ENCODE measurements at regions of chr10 and their contacts with region 1.

Region 1: GRCh38 chr10:12264204-12264940 is 68.4 kb downstream of the CDC123 start:
- DNase-seq: peak; percentile 84
- H3K4me3 Mint-ChIP-seq: peak overlapping the region; percentile 58
- H3K27ac Mint-ChIP-seq: peak overlapping the region; percentile 79
- H3K4me1 Mint-ChIP-seq: peaks cover 17% of the 10 kb centered on the region
- H3K27me3 Mint-ChIP-seq: no peaks in the 10 kb centered on the region

Region 2: DNA sequence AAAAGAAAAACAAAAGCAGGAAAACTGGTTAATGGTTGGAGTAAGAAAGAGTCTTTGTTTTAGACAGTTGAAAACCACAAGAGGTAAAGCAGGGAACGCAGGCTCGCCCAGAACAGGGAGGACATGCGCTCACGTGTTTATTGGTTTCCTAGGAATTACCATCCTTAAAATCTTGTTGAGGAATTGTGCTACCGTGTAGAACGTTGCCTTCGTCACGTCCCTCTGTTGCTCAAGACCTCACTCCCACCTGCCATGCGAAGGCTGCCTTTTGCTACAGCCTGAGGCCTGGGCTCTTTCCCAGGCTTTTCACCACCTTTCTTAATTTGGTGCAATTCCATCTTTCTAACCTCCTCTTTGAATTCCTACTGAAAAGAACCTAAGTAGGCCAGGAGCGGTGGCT is 23.4 kb after region 1 on chr10:
- CTCF ChIA-PET with region 1: no interaction called
- intact Hi-C with region 1: no loop called
- DNase-seq: no peak
- H3K4me3 Mint-ChIP-seq: no peak overlapping the region
- H3K27ac Mint-ChIP-seq: no peak overlapping the region
- H3K4me1 Mint-ChIP-seq: no peaks in the 10 kb centered on the region
- H3K27me3 Mint-ChIP-seq: no peaks in the 10 kb centered on the region

Region 3: DNA sequence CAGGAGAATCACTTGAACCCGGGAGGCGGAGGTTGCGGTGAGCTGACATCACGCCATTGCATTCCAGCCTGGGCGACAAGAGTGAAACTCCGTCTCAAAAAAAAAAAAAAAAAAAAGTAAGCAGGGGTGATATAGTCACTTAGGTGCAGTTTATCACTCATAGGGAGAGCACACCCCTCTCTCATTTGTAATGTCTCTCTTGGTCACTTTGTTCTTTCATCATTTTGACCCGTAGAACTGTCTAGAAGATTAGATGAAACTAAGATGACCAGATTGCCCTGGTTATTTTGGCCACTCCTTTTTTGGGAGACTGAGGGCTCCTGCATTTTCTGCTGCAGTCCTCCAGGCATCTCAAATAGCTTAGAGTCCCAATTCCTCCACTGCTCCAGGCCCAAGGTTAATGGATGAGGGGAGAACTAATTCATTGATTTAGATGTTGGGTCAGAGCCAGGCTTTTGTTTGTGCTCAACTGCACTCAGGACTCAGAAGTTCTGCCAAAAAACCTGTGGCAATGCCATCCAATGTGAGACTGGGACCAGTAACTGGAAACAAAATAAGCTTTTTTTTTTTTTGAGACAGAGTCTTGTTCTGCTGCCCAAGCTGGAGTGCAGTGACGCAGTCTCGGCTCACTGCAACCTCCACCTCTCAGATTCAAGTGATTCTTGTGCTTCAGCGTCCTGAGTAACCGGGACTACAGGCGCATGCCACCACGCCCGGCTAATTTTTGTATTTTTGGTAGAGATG is 35.0 kb after region 1 on chr10:
- CTCF ChIA-PET with region 1: no interaction called
- intact Hi-C with region 1: loop called (anchors 2 kb)
- DNase-seq: no peak
- H3K4me3 Mint-ChIP-seq: no peak overlapping the region
- H3K27ac Mint-ChIP-seq: no peak overlapping the region
- H3K4me1 Mint-ChIP-seq: peaks cover 10% of the 10 kb centered on the region
- H3K27me3 Mint-ChIP-seq: no peaks in the 10 kb centered on the region

Region 4: DNA sequence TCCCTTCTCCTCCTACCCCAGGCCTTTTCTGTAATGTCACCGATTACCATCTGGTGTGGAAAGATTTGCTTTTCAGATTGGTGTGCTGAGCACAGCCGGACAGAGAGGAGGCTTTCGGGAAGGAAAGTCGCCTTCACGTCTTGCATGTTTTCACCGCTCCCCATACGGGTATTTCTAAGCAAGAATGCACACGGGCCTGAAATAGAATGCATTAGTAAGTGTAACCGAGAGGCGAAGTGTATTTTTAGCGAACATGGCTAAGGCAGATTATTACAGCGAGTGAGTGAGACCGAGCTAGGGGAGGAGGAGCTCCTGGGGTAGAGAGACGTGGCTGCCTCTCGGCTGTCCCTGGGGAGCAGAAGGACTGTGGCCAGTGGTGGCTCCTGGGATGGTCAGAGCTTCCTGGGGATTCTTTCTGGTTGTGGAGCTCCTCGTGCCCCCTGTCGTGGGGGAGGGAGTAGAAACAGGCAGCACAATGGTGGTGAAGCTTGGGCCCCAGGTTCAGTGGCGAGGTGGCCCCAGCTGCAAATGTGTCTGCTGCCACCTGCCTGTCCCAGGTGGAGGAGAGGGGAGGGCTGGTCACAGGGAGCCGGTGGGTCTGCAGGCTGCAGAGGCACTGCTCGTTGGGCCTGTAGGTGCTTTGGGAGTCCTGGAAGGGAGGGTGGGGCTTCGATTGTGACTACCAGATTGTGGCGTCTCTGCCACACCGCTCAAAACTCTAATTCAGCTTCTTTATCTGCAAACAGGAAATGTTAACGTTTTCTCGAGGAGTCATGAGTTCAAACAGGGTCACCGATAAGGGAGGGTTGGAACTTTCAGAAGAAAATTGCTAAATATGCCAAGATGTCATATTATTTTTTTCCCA is 220.8 kb after region 1 on chr10:
- CTCF ChIA-PET with region 1: interaction called, 7 read pairs
- intact Hi-C with region 1: loop called (anchors 1 kb)
- DNase-seq: peak; percentile 65
- H3K4me3 Mint-ChIP-seq: peak overlapping the region; percentile 25
- H3K27ac Mint-ChIP-seq: peak overlapping the region; percentile 8
- H3K4me1 Mint-ChIP-seq: peaks cover 20% of the 10 kb centered on the region
- H3K27me3 Mint-ChIP-seq: no peaks in the 10 kb centered on the region

Region 5: DNA sequence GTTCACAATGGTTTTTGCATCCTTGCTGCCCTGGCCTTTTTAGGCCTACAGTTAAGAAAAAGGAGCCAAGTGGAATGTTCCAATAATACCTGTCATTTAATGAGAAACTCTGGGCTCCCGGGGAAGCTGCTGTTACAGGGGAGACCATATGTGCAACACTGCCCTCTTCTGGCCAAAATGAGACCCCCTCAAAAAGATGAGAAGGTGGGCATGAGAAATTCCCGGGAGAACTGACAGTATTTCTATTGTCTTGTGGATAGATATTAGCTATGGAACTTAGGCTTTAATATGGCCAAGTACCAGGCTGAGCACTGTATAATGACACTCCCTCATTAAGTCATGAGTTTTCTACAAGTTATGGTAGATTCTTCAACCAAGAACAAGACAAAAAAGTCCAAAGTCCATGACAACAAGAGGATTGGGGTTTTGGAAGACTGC is 637.8 kb after region 1 on chr10:
- CTCF ChIA-PET with region 1: interaction called, 3 read pairs
- intact Hi-C with region 1: loop called (anchors 1 kb)
- DNase-seq: peak; percentile 71
- H3K4me3 Mint-ChIP-seq: no peak overlapping the region
- H3K27ac Mint-ChIP-seq: no peak overlapping the region
- H3K4me1 Mint-ChIP-seq: no peaks in the 10 kb centered on the region
- H3K27me3 Mint-ChIP-seq: peaks cover 5% of the 10 kb centered on the region

Measured in activated naive CD4-positive, alpha-beta T cell treated with anti-CD3 and anti-CD28 coated beads for 36 hours (primary cell).